Body of pancreas (tissue), 4 donors: ENCODE measurements at regions of chr11 and their contacts with region 1.

Region 1: GRCh38 chr11:35404388-35404775 is 15.0 kb downstream of the SLC1A2 start:
- DNase-seq: peak; percentile 86 to 91 (median 90)
- ATAC-seq: peak; percentile 93
- H3K4me3 ChIP-seq: no peak overlapping the region
- H3K27ac ChIP-seq: peak overlapping the region; percentile 75 to 91 (median 80)
- H3K4me1 ChIP-seq: peaks cover 29% of the 10 kb centered on the region
- H3K27me3 ChIP-seq: no peaks in the 10 kb centered on the region
- CTCF ChIP-seq: peak; percentile 55 to 94 (median 89)
- POLR2A ChIP-seq: peak in 2 of 3 donors; percentile 54 to 74

Region 2: DNA sequence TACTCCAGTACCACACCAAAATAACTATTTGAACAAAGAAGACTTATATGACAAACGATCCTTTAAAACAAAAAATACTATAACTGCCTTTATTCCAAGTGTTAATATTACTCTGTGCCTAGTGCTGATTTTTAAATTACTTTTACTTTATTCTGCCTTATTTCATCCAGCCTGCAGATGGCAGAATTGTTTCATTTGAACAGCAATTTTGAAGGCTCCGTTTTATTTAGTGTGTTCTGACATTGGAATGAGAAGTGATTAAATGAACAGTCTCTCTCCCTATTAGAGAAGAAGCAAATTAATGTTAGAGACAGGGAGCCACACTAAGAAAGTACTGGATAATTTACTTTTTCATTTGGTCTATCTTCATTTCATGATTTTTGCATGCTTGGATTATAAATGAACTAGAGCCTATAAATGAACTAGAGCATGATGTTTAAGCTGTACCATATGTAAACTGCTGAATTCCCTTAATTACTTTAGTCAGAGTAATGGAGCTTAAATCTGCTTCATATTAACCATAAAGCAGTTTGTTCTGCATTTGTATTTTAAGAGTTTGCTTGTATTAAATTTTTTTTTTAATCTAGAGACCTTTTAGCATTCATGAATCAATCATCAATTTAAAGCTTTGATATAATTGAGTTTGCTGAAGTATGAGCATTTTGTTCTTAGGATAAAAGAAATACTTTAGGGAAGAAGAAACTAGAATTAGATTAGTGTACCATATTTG is 478.1 kb before region 1 on chr11:
- intact Hi-C with region 1: loop called (anchors 10 kb)
- DNase-seq: peak in 1 of 4 donors; percentile 23
- ATAC-seq: peak; percentile 77
- H3K4me3 ChIP-seq: no peak overlapping the region
- H3K27ac ChIP-seq: peak overlapping the region in 2 of 4 donors; percentile 7 to 33
- H3K4me1 ChIP-seq: peaks cover 62% of the 10 kb centered on the region
- H3K27me3 ChIP-seq: no peaks in the 10 kb centered on the region
- CTCF ChIP-seq: peak; percentile 54 to 94 (median 79)
- POLR2A ChIP-seq: no peak

Region 3: GRCh38 chr11:34997952-34998528 is 406.3 kb before region 1 on chr11:
- intact Hi-C with region 1: loop called (anchors 10 kb)
- DNase-seq: no peak
- ATAC-seq: peak; percentile 73
- H3K4me3 ChIP-seq: no peak overlapping the region
- H3K27ac ChIP-seq: peak overlapping the region in 1 of 4 donors; percentile 42
- H3K4me1 ChIP-seq: peaks cover 25% of the 10 kb centered on the region
- H3K27me3 ChIP-seq: no peaks in the 10 kb centered on the region
- CTCF ChIP-seq: peak; percentile 13 to 81 (median 69)
- POLR2A ChIP-seq: no peak

Region 4: GRCh38 chr11:35138943-35139721 is 265.2 kb before region 1 on chr11 and contains the start of gene CD44:
- intact Hi-C with region 1: no loop called
- DNase-seq: peak; percentile 75 to 87 (median 84)
- ATAC-seq: peak; percentile 77
- H3K4me3 ChIP-seq: peak within 1 kb of the TSS; percentile 33 to 53
- H3K27ac ChIP-seq: peak within 1 kb of the TSS; percentile 76 to 93 (median 88)
- H3K4me1 ChIP-seq: peaks cover 72% of the 10 kb centered on the region
- H3K27me3 ChIP-seq: no peaks in the 10 kb centered on the region
- CTCF ChIP-seq: no peak
- POLR2A ChIP-seq: peak; percentile 81 to 94 (median 91)
- total RNA-seq, gene CD44: 266 to 433 TPM

Region 5: DNA sequence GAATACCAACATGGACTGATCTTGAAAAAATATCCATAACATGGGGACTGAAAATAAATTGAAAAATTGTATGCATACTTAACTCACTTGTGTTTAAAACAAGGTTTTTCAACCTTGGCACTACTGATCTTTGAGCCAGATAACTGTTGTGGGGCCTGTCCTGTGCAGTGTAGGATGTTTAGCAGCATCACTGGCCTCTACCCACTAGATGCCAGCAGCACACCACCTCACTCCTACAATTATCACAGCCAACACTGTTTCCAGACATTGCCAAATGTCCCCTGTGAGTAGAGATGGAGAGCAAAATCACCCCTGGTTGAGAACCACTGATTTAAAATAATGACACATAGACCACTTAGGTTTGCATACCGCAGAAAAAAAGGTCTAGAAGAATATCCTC is 59.9 kb after region 1 on chr11:
- intact Hi-C with region 1: no loop called
- DNase-seq: no peak
- ATAC-seq: no peak
- H3K4me3 ChIP-seq: no peak overlapping the region
- H3K27ac ChIP-seq: no peak overlapping the region
- H3K4me1 ChIP-seq: no peaks in the 10 kb centered on the region
- H3K27me3 ChIP-seq: no peaks in the 10 kb centered on the region
- CTCF ChIP-seq: no peak
- POLR2A ChIP-seq: no peak